Ascending aorta (tissue), 2 donors: ENCODE measurements at regions of chr14 and their contacts with region 1.

Region 1: GRCh38 chr14:58637391-58638230 is at the start of gene DACT1:
- DNase-seq: peak in 1 of 2 donors; percentile 84
- H3K4me3 ChIP-seq: peak within 1 kb of the TSS; percentile 95 to 99
- H3K27ac ChIP-seq: peak within 1 kb of the TSS; percentile 99
- H3K4me1 ChIP-seq: peaks cover 0 to 15% of the 10 kb centered on the region in 2 donors
- H3K27me3 ChIP-seq: no peaks in the 10 kb centered on the region
- CTCF ChIP-seq: peak in 1 of 3 experiments; percentile 28
- total RNA-seq, gene DACT1: 46.0 TPM

Region 2: DNA sequence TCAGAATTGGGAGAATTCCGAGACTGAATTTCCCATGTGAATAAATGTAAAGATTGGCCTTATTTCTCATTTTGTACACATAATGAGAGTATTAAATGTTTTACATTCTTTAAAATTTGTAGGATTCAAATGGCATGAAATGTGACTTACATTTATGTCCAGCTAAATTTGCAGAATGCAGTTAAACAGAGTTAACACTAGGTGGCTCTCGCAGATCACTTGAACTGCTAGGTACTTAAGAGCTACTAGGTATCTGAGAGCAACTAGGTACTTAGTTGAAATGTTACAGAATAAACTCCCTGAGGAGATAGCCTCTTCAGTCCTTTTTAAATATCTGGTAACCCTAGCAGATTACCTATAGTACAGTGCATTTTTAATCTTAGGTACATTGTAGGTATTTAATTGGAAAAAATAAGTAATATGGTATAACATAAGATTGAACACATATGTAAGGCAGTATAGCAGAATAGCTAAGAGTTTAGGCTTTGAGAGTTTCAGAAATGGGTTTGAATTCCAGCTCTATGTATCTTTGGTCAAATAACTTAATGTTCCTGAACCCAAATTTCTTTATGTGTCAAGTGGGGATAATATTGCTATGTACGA is 136.3 kb before region 1 on chr14:
- intact Hi-C with region 1: loop called (anchors 2 kb)
- DNase-seq: no peak
- H3K4me3 ChIP-seq: no peak overlapping the region
- H3K27ac ChIP-seq: no peak overlapping the region
- H3K4me1 ChIP-seq: no peaks in the 10 kb centered on the region
- H3K27me3 ChIP-seq: no peaks in the 10 kb centered on the region
- CTCF ChIP-seq: peak; percentile 70 to 88 (median 79)

Region 3: GRCh38 chr14:58731465-58732330 is 94.1 kb after region 1 on chr14:
- intact Hi-C with region 1: loop called (anchors 5 kb)
- DNase-seq: no peak
- H3K4me3 ChIP-seq: peak overlapping the region in 1 of 2 donors; percentile 22
- H3K27ac ChIP-seq: peak overlapping the region; percentile 69 to 70
- H3K4me1 ChIP-seq: peaks cover 0 to 12% of the 10 kb centered on the region in 2 donors
- H3K27me3 ChIP-seq: no peaks in the 10 kb centered on the region
- CTCF ChIP-seq: no peak

Region 4: GRCh38 chr14:59055439-59056045 is 417.9 kb after region 1 on chr14:
- intact Hi-C with region 1: loop called (anchors 1 kb)
- DNase-seq: no peak
- H3K4me3 ChIP-seq: no peak overlapping the region
- H3K27ac ChIP-seq: no peak overlapping the region
- H3K4me1 ChIP-seq: no peaks in the 10 kb centered on the region
- H3K27me3 ChIP-seq: no peaks in the 10 kb centered on the region
- CTCF ChIP-seq: peak; percentile 53 to 77 (median 54)

Region 5: GRCh38 chr14:59428581-59429012 is 791.0 kb after region 1 on chr14:
- intact Hi-C with region 1: loop called (anchors 10 kb)
- DNase-seq: no peak
- H3K4me3 ChIP-seq: no peak overlapping the region
- H3K27ac ChIP-seq: peak overlapping the region; percentile 56
- H3K4me1 ChIP-seq: peaks cover 0 to 30% of the 10 kb centered on the region in 2 donors
- H3K27me3 ChIP-seq: no peaks in the 10 kb centered on the region
- CTCF ChIP-seq: peak in 2 of 3 experiments; percentile 21 to 42